Naive thymus-derived CD4-positive, alpha-beta T cell (primary cell): ENCODE measurements at regions of chr10 and their contacts with region 1.

Region 1: GRCh38 chr10:59625721-59626522 is 83.7 kb downstream of the SLC16A9 start:
- DNase-seq: peak in 8 of 9 donors; percentile 28 to 73 (median 64)
- ATAC-seq: peak; percentile 84
- H3K4me3 ChIP-seq: no peak overlapping the region
- H3K4me3 Mint-ChIP-seq: no peak overlapping the region
- H3K27ac ChIP-seq: no peak overlapping the region
- H3K27ac Mint-ChIP-seq: peak overlapping the region in 1 of 9 donors; percentile 32
- H3K4me1 ChIP-seq: no peaks in the 10 kb centered on the region
- H3K4me1 Mint-ChIP-seq: peaks cover 0 to 7% (median 3%) of the 10 kb centered on the region in 7 donors
- H3K27me3 ChIP-seq: no peaks in the 10 kb centered on the region
- H3K27me3 Mint-ChIP-seq: peaks cover 0 to 21% (median 1%) of the 10 kb centered on the region in 5 donors

Region 2: DNA sequence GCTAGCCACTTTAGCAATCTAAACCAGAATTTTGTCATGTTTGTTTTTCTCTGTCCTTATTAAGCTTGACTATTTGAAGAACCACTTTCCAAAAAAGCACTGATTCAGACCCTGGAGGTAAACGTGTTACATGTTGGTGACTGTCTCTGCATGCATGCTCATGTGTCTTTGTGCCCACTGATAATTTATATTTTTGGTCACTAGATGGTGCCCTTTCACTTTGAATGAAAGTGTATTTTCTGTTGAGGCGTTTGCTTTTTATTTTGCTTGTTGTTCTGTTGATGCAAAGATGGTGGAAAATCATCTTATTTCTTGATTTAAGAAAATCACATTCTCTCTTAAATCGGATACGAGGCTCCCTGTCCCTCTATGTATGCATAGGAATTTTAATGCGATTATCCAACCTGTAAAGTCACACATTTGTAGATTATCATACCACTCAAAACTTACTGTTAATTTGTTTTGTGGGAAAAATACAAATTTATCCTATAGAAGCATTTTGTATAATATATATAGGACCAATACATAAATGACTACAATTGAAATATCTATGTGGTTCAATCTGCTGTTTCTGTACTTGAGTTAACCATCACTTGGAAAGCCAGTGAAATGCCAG is 843.9 kb before region 1 on chr10:
- CTCF ChIA-PET with region 1: no interaction called
- POLR2A ChIA-PET with region 1: no interaction called
- intact Hi-C with region 1: loop called in 1 of 2 experiments (anchors 1 kb)
- DNase-seq: peak in 2 of 9 donors; percentile 1 to 5
- ATAC-seq: no peak
- H3K4me3 ChIP-seq: no peak overlapping the region
- H3K4me3 Mint-ChIP-seq: no peak overlapping the region
- H3K27ac ChIP-seq: no peak overlapping the region
- H3K27ac Mint-ChIP-seq: no peak overlapping the region
- H3K4me1 ChIP-seq: no peaks in the 10 kb centered on the region
- H3K4me1 Mint-ChIP-seq: no peaks in the 10 kb centered on the region
- H3K27me3 ChIP-seq: no peaks in the 10 kb centered on the region
- H3K27me3 Mint-ChIP-seq: peaks cover 0 to 13% (median 0%) of the 10 kb centered on the region in 5 donors

Region 3: GRCh38 chr10:59493017-59493416 is 132.9 kb before region 1 on chr10:
- CTCF ChIA-PET with region 1: no interaction called
- POLR2A ChIA-PET with region 1: no interaction called
- intact Hi-C with region 1: no loop called
- DNase-seq: no peak
- ATAC-seq: no peak
- H3K4me3 ChIP-seq: no peak overlapping the region
- H3K4me3 Mint-ChIP-seq: no peak overlapping the region
- H3K27ac ChIP-seq: no peak overlapping the region
- H3K27ac Mint-ChIP-seq: no peak overlapping the region
- H3K4me1 ChIP-seq: no peaks in the 10 kb centered on the region
- H3K4me1 Mint-ChIP-seq: peaks cover 0 to 5% (median 0%) of the 10 kb centered on the region in 7 donors
- H3K27me3 ChIP-seq: no peaks in the 10 kb centered on the region
- H3K27me3 Mint-ChIP-seq: no peaks in the 10 kb centered on the region

Region 4: DNA sequence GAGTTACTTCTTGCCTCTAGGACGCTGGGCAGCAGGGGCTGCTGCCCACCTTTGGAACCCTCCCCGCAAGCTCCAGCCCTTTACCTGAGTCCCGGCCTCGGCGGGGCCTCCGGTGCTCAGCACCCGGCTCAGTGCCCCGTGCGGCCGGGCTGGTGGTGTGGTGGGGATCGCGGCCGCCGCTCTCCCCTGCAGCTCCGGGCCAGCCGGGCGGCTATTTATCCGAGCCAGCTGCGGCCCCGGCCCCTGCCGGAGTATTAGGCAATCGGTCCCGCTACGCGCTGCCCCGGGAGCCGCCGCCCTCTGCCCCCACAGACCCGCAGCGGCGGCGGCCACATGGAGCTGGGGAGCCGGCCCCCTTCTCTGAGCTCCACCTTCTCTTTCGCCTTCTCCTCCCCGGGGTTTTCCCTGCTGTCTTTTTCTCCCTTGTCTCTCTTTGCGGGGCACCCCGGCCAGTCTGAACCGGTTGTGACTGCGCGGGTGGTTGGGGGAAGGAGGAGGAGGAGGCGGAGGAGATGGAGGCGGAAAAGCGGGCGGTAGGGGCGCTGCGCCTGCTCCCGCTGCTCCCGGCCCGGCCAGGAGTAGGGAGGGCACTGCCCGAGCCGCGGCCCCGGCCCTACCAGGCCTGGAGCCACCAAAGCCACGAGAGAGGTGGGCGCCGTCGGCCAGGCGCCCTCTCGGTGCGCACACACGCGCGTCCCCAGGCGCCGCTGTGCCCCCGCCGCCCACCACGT is 83.6 kb after region 1 on chr10 and contains the start of gene SLC16A9:
- CTCF ChIA-PET with region 1: no interaction called
- POLR2A ChIA-PET with region 1: no interaction called
- intact Hi-C with region 1: loop called in 1 of 2 experiments (anchors 2 kb)
- DNase-seq: peak in 2 of 9 donors; percentile 1 to 75
- ATAC-seq: peak; percentile 60
- H3K4me3 ChIP-seq: no peak within 1 kb of the TSS
- H3K4me3 Mint-ChIP-seq: peak within 1 kb of the TSS in 8 of 10 donors; percentile 2 to 86 (median 48)
- H3K27ac ChIP-seq: no peak within 1 kb of the TSS
- H3K27ac Mint-ChIP-seq: peak within 1 kb of the TSS in 1 of 9 donors; percentile 34
- H3K4me1 ChIP-seq: no peaks in the 10 kb centered on the region
- H3K4me1 Mint-ChIP-seq: peaks cover 0 to 13% (median 0%) of the 10 kb centered on the region in 7 donors
- H3K27me3 ChIP-seq: no peaks in the 10 kb centered on the region
- H3K27me3 Mint-ChIP-seq: peaks cover 67 to 77% (median 70%) of the 10 kb centered on the region in 5 donors
- total RNA-seq, gene SLC16A9: 1.5 TPM in 1 of 5 experiments, not detected in the others

Region 5: GRCh38 chr10:59865101-59865500 is 239.2 kb after region 1 on chr10:
- CTCF ChIA-PET with region 1: no interaction called
- POLR2A ChIA-PET with region 1: no interaction called
- intact Hi-C with region 1: loop called in 1 of 2 experiments (anchors 1 kb)
- DNase-seq: peak in 5 of 9 donors; percentile 9 to 27 (median 16)
- ATAC-seq: peak; percentile 59
- H3K4me3 ChIP-seq: no peak overlapping the region
- H3K4me3 Mint-ChIP-seq: peak overlapping the region in 9 of 10 donors; percentile 1 to 60 (median 41)
- H3K27ac ChIP-seq: no peak overlapping the region
- H3K27ac Mint-ChIP-seq: peak overlapping the region in 8 of 9 donors; percentile 0 to 77 (median 58)
- H3K4me1 ChIP-seq: peaks cover 4 to 14% of the 10 kb centered on the region in 2 donors
- H3K4me1 Mint-ChIP-seq: peaks cover 41 to 80% (median 64%) of the 10 kb centered on the region in 7 donors
- H3K27me3 ChIP-seq: no peaks in the 10 kb centered on the region
- H3K27me3 Mint-ChIP-seq: no peaks in the 10 kb centered on the region

Region 6: DNA sequence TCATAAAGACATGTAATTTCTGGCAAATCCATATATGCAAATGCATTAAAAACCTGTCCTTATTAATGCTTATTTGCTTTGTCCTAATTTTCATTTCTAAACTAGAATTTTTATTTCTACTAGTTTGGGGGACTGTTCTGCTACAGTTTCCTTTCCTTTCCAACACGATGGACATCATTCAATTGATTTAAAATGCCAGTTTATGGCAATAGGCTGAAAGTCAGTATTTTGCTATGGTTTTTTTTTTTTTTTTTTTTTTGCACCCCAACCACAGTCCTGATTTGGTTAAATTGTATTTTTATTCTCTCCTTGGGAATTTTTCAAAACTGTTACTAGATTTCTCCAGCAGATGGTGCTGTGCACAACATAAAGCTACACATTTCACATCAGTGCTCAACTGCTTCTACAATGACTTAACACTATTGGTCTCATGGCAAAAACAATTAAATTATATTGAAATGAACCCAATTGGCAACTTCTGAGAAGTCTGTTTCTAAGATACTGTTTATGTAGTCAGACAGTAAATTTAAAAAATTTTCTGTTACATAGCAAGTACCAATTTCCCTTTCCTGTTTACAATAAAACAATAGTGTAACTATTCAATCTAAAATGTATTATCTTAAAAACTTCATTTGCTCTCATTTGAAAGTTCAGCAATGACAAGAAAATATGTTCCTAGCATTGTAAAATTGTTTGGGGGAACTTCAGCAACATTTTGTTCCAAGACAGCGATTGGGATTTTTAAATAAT is 474.3 kb after region 1 on chr10:
- CTCF ChIA-PET with region 1: no interaction called
- POLR2A ChIA-PET with region 1: no interaction called
- intact Hi-C with region 1: loop called (anchors 1 kb)
- DNase-seq: peak in 6 of 9 donors; percentile 14 to 43 (median 31)
- ATAC-seq: peak; percentile 69
- H3K4me3 ChIP-seq: no peak overlapping the region
- H3K4me3 Mint-ChIP-seq: no peak overlapping the region
- H3K27ac ChIP-seq: no peak overlapping the region
- H3K27ac Mint-ChIP-seq: no peak overlapping the region
- H3K4me1 ChIP-seq: no peaks in the 10 kb centered on the region
- H3K4me1 Mint-ChIP-seq: no peaks in the 10 kb centered on the region
- H3K27me3 ChIP-seq: no peaks in the 10 kb centered on the region
- H3K27me3 Mint-ChIP-seq: no peaks in the 10 kb centered on the region

Region 7: GRCh38 chr10:60646966-60647796 is 1021.3 kb after region 1 on chr10:
- CTCF ChIA-PET with region 1: interaction called, 7 read pairs
- POLR2A ChIA-PET with region 1: no interaction called
- intact Hi-C with region 1: loop called in 1 of 2 experiments (anchors 5 kb)
- DNase-seq: peak in 7 of 9 donors; percentile 16 to 61 (median 47)
- ATAC-seq: peak; percentile 67
- H3K4me3 ChIP-seq: no peak overlapping the region
- H3K4me3 Mint-ChIP-seq: no peak overlapping the region
- H3K27ac ChIP-seq: no peak overlapping the region
- H3K27ac Mint-ChIP-seq: peak overlapping the region in 2 of 9 donors; percentile 8 to 14
- H3K4me1 ChIP-seq: peaks cover 0 to 7% of the 10 kb centered on the region in 2 donors
- H3K4me1 Mint-ChIP-seq: peaks cover 19 to 70% (median 46%) of the 10 kb centered on the region in 7 donors
- H3K27me3 ChIP-seq: no peaks in the 10 kb centered on the region
- H3K27me3 Mint-ChIP-seq: no peaks in the 10 kb centered on the region

Region 8: GRCh38 chr10:60964257-60965235 is 1338.6 kb after region 1 on chr10:
- CTCF ChIA-PET with region 1: no interaction called
- POLR2A ChIA-PET with region 1: no interaction called
- intact Hi-C with region 1: loop called in 1 of 2 experiments (anchors 1 kb)
- DNase-seq: peak in 7 of 9 donors; percentile 9 to 47 (median 29)
- ATAC-seq: peak; percentile 74
- H3K4me3 ChIP-seq: no peak overlapping the region
- H3K4me3 Mint-ChIP-seq: no peak overlapping the region
- H3K27ac ChIP-seq: no peak overlapping the region
- H3K27ac Mint-ChIP-seq: no peak overlapping the region
- H3K4me1 ChIP-seq: no peaks in the 10 kb centered on the region
- H3K4me1 Mint-ChIP-seq: peaks cover 0 to 18% (median 0%) of the 10 kb centered on the region in 7 donors
- H3K27me3 ChIP-seq: no peaks in the 10 kb centered on the region
- H3K27me3 Mint-ChIP-seq: peaks cover 24 to 30% (median 26%) of the 10 kb centered on the region in 5 donors